Mucosa of descending colon (tissue), 3 donors: ENCODE measurements at regions of chr20 and their contacts with region 1.

Region 1: GRCh38 chr20:22312744-22313346 is 271.5 kb downstream of the FOXA2 start:
- DNase-seq: peak in 1 of 3 donors; percentile 50
- ATAC-seq: no peak
- H3K4me3 ChIP-seq: no peak overlapping the region
- H3K4me1 ChIP-seq: no peaks in the 10 kb centered on the region
- CTCF ChIP-seq: peak; percentile 27

Region 2: DNA sequence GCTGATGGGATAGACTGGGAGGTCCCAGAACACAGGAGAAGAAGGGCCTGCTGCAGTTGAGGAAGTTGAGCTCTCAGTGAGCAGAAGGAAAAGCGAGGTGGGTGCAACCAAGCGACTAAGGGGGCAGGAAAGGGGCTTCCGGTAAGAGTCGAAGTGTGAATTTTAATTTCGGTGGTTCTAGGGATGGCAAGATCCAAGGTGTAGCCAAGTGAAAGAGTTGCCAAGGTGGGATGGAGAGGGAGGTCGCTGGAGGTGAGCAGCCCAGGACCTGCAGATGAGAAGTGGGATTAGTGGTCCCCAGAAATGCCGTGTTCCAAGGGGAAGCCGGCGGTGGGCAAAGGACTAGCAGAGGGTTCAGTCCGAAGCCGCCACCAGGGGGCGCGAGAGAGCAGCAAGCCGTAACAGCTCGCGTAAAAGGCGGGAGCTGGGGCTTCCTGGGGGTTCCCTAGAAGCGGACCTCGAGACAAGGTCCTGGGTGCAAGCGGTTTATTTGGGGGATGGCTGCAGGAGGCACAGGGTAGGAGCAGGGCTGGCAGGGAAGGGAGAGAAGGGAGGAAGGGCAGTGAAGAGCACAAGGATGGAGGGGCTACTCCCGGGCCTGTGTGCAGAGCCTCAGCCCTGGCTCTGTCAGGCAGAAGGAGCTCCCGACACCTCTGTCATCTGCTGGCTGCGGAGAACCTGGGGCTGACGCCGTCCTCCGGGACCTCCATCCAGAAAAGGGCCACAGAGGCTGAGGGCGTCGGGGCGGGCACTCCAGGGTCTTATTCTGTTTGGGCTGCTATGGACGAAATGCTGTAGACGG is 503.8 kb before region 1 on chr20:
- intact Hi-C with region 1: loop called in 1 of 2 experiments (anchors 5 kb)
- DNase-seq: peak; percentile 49 to 62 (median 56)
- ATAC-seq: peak; percentile 49
- H3K4me3 ChIP-seq: no peak overlapping the region
- H3K4me1 ChIP-seq: no peaks in the 10 kb centered on the region
- CTCF ChIP-seq: peak; percentile 52

Region 3: GRCh38 chr20:22106308-22106938 is 206.4 kb before region 1 on chr20:
- intact Hi-C with region 1: no loop called
- DNase-seq: no peak
- ATAC-seq: no peak
- H3K4me3 ChIP-seq: no peak overlapping the region
- H3K4me1 ChIP-seq: no peaks in the 10 kb centered on the region
- CTCF ChIP-seq: no peak

Region 4: GRCh38 chr20:22207280-22207679 is 105.6 kb before region 1 on chr20:
- intact Hi-C with region 1: no loop called
- DNase-seq: no peak
- ATAC-seq: no peak
- H3K4me3 ChIP-seq: no peak overlapping the region
- H3K4me1 ChIP-seq: no peaks in the 10 kb centered on the region
- CTCF ChIP-seq: no peak

Region 5: DNA sequence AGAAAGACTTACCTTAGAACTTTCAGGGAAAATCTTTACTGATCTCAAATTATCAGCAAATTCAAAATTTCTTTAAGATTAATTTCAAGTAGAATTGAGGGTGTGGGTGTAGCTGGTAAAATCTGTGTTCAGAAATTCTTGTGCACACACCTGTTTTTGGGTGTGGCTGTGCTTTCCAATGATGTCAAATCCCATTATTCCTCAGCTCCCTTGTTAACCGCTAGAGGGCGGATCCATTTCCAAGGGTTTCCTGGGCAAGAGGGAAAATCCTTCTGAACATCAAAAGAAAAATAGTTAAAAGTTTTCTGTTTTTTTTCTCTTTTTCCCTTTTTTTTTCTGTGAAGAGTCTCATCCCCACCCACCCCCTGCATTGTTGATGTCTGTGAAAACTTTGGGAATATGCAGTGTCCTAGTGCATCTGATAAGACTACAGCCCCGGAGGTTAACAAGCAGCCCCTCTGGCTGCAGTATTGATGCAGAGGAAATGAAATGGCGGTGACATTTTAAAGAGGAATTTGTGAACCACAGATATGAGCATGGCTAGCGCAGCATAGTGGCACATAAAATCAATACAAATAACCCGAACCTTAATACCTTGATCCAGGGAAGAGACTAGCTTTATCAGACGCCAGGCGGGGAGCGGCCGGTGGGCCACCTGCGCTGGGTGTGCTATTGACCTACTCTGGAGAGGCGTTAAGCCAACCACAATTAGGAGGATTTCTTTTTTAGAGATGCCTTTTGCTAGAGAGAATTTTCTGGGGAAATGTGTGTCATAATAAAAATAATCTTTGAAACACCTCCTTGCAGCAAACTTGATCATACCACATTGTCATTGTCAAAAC is 140.6 kb after region 1 on chr20:
- intact Hi-C with region 1: no loop called
- DNase-seq: peak in 1 of 3 donors; percentile 70
- ATAC-seq: peak; percentile 77
- H3K4me3 ChIP-seq: no peak overlapping the region
- H3K4me1 ChIP-seq: peaks cover 26% of the 10 kb centered on the region
- CTCF ChIP-seq: peak; percentile 70